AG04449 (cell line): ENCODE measurements at regions of chr12 and their contacts with region 1.

Region 1: GRCh38 chr12:52879394-52880351 is 25.2 kb downstream of the KRT8 start:
- DNase-seq: peak; percentile 40
- H3K4me3 ChIP-seq: peak overlapping the region; percentile 41
- CTCF ChIP-seq: peak; percentile 100

Region 2: DNA sequence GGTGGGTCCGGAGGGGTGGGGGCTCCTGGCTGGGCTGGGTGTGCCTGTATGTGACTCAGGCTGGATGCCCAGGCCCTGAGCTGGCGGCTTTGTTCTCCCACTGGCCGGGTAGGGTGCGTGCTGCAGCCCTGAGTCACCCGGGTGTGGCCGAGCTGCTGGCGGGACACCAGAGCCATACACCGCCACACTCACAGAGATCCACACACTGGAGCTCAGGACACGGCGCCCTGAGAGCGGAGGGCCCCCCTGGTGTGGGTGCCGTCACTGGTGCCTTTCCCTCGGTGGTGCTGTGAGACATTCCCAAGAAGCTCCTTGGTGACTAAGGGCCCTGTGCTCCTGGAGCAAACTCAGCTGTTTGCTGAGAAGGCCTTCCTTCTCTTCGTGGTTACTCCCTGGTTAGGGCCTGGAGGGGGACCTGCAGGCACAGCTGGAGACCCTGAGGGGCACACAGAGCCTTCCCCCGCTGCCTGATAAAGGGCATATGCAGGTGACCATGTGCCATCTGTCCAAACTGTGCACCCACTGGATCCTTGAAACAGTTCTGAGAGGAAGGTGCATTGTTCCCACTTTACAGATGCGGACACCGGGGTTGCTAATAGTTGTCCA is 732.2 kb before region 1 on chr12:
- CTCF ChIA-PET with region 1: interaction called, 110 read pairs
- POLR2A ChIA-PET with region 1: interaction called, 4 read pairs
- DNase-seq: peak; percentile 92
- H3K4me3 ChIP-seq: no peak overlapping the region
- CTCF ChIP-seq: no peak

Region 3: DNA sequence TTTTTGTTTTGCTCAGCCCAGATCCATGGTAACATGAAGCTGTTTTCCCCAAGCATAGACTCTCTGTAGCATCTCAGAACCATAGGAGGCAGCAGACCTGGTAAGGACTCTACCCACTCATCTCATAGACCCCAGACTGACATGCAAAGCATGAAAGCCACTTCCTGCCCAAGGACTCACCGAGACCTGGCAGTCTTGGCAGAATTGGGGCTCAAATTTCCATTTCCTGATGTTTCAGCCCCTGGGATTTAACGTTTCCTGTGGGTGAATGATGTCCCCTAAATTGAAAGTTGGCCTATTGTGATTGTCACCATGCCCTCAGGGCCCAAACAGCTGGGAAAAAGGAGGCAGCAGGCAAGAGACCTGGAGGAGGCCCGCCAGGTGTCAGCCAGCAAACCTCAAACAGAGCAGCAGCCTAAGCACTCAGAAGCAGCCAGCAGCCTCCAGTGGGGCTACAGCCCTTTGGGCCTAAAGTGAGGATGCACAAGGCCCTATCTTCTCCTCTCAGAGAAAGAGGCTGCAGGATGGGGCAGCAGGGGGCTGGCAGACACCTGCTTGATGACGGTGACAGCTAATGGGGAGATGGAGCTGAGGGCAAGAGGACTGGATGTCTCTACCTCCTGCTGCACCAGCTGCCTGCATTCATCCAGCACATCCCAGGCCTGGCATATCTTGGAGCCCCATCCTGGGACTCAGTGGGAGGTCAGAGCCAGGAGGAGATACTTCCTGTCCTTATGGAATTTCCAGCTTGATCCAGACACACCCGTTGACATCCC is 520.9 kb before region 1 on chr12:
- CTCF ChIA-PET with region 1: interaction called, 17 read pairs
- POLR2A ChIA-PET with region 1: no interaction called
- DNase-seq: no peak
- H3K4me3 ChIP-seq: no peak overlapping the region
- CTCF ChIP-seq: no peak

Region 4: DNA sequence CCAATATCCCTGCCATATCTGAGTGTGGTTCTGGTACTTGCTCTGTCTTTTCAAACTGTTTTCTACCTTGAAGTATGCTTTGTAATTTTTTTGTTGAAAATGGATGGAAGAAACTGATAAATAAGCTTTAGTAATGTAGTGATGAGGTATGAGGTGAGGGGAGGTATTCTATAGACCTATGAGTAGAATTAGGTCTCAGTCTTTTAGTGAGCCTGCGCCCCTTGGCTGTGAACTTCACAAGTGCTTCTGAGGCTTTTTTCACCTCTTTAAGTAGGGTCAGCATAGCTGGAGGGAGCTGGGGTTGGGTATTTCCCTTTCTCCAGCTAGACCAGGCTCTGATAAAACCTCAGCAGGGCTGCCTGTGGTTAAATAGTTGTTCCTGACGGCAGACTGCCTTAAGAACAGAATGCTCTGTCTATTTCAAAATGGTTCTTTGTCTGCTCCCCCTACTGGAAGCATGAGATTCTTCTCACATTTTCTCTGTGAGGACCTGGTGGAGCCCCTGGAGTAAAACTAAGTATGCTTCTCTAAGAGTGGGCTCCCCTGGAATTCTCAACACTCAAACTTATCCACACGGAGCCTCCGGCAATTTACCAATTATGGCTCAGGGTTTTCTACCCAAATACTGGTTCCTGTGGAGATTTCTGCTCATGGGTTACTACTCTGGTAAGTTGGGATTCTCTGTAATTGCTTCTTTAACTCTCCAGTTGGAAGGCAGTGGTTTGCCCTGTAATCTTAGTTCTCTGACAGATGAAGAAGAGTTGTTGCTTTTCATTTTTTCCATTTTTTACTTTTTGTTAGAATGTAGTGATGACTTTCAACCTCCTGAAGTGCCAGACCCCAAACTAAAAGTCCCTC is 372.6 kb before region 1 on chr12:
- CTCF ChIA-PET with region 1: interaction called, 10 read pairs
- POLR2A ChIA-PET with region 1: no interaction called
- DNase-seq: peak; percentile 51
- H3K4me3 ChIP-seq: no peak overlapping the region
- CTCF ChIP-seq: peak; percentile 46

Region 5: DNA sequence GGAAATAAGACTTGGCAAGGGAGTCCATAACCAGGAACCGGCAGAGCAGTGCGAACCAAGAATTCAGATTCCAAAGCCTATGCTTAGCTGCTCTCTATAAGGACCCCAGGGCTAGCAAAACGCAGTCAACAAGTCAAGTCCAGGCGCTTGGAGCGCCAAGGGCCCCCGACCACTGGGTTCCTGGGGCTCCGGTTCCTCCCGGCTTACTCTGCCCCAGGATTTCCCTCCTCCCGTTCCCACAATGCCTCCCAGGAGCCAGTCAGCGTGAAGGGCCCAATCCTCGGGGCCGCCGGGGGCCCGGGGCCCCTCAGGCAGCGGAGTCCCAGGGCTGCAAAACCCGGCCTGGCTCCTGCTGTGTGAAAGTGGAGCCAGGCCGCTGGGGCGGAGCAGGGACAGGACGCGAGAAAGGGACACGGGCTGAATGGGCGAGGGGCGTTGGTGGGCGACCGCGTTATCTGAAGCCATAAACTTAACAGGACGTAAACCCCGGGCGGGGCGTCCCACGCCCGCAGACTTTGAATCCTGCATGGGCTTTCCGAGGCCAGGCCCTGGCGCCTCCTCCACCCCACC is 23.7 kb after region 1 on chr12:
- CTCF ChIA-PET with region 1: interaction called, 194 read pairs
- POLR2A ChIA-PET with region 1: no interaction called
- DNase-seq: no peak
- H3K4me3 ChIP-seq: peak overlapping the region; percentile 30
- CTCF ChIP-seq: no peak

Region 6: DNA sequence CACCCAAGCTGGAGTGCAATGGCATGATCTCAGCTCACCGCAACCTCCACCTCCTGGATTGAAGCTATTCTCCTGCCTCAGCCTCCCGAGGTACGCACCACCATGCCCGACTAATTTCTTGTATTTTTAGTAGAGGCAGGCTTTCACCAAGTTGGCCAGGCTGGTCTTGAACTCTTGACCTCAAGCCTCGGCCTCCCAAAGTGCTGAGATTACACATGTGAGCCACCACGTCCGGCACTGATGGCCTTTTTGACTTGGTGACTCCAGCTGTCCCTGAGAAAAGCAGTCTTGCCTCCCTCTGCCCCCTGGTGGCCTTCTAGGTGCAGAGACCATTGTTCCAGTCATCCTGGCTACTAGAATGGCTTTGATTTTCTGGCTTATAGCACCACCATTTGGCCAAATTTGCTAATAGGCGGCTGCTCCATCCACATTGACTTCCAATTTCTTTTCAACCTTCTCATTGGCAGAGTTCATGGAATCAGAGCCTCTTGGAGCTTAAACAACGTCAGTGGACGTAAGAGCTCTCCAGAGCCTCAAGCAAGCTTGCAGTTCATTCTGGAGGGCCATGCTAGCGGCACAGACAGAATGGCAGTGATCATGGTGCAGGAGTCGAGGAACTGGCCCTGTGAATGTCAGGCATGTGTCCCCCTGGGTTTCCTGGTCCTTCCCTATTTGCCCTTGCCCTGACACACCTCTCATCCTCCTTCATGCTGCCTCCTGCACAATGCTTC is 101.2 kb after region 1 on chr12:
- CTCF ChIA-PET with region 1: interaction called, 1,953 read pairs
- POLR2A ChIA-PET with region 1: interaction called, 3 read pairs
- DNase-seq: no peak
- H3K4me3 ChIP-seq: no peak overlapping the region
- CTCF ChIP-seq: peak; percentile 98